Right ventricle myocardium superior (tissue), 1 donor: ENCODE measurements at regions of chr17 and their contacts with region 1.

Region 1: DNA sequence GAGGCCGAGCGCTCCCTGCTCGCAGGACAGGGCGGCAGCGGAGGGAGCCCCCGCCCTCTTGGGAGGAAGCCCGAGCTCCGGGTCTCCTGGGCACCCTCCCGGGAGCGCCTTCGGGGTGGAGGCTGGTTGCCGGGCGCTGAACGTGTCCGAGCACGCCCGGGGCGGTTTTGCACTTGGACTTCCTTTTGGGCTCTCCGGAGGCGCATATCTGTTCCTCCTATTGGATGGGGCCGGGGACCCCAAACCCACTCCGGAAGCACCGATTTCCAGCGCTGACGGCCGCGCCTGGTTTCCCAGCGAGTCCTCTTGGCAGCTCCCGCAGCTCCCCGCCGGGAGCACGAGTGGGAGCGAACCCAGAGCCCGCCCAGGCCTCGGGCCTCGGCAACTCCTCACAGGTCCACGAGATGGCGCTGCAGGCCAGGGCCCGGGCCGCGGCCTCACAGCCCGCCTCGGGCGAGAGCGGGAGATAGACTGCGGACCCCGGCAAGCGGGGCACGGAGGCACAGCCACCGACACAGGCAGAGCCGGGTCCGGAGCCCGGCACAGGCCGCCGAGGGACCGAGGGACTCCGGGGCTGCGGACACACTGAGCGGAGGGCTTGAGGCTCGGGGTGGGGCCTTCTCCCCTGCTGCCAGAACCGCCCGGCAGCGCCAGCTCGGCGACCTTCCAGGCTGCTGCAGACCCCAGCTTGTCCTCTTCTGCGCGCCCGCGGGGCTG is 12.7 kb downstream of the TBX2 start:
- DNase-seq: peak; percentile 90
- ATAC-seq: peak; percentile 85

Region 2: GRCh38 chr17:60720763-60721531 is 691.4 kb before region 1 on chr17:
- intact Hi-C with region 1: no loop called
- DNase-seq: no peak
- ATAC-seq: peak; percentile 56

Region 3: GRCh38 chr17:61511480-61512182 is 99.3 kb after region 1 on chr17:
- intact Hi-C with region 1: no loop called
- DNase-seq: no peak
- ATAC-seq: no peak

Region 4: DNA sequence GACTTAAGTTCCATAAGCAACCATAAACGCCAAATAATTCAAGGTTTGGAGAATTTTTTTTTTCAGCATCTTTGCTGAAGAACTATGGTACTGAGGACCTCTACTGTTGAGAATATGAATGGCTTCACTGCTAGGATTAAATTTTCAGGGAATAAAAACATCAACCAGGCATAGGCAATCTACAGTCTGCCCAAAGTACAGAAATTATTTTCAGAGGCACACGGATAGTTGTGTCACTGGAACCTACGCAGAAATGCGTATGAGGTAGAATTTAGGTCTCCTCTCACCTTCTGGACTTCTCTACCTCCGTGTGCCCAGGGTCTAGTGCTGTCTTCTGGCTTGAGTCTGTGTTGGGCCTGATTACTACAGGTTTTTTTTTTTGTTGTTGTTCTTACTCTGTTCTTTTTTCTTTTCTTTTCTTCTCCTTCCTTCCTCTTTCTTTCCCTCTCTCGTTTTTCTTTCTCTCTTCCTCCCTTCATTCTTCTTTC is 139.0 kb after region 1 on chr17:
- intact Hi-C with region 1: loop called (anchors 5 kb)
- DNase-seq: no peak
- ATAC-seq: no peak

Region 5: GRCh38 chr17:62065598-62066468 is 653.5 kb after region 1 on chr17:
- intact Hi-C with region 1: loop called (anchors 10 kb)
- DNase-seq: peak; percentile 99
- ATAC-seq: peak; percentile 99